CD14-positive monocyte (primary cell): ENCODE measurements at regions of chr22 and their contacts with region 1.

Region 1: DNA sequence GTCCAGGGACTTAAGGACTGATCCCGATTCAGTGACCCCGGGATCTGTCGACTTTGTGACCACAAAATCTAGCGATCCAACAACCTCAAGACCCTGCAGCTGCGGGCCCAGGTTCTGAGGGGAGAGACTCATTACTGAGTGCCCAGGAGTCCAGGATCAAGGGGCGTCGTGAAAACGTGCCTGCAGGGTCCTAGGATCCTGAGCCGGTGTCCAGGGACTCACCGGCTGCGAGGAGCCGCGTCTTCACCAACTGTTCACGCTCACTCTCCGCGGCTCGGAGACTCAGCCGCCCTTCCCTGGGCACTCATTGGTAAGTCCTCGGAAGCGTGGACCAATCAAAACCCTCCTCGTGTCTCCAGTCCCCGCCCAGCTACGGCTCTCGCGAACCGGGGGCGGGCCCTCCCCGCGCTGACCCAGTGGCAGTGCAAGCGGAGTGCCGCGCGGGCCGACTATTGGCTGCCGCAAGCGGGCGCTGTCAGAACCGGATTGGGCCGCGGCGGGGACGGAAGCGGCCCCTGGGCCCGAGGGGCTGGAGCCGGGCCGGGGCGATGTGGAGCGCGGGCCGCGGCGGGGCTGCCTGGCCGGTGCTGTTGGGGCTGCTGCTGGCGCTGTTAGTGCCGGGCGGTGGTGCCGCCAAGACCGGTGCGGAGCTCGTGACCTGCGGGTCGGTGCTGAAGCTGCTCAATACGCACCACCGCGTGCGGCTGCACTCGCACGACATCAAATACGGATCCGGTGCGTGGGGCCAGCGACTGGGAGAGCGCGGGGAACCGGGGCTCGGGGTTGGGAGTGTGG is at the start of gene SDF2L1:
- DNase-seq: peak; percentile 98 to 99 (median 99)
- H3K4me3 ChIP-seq: peak within 1 kb of the TSS; percentile 50 to 71 (median 69)
- H3K4me3 Mint-ChIP-seq: peak within 1 kb of the TSS; percentile 78 to 86
- H3K27ac ChIP-seq: peak within 1 kb of the TSS; percentile 64 to 89
- H3K27ac Mint-ChIP-seq: peak within 1 kb of the TSS; percentile 78 to 92 (median 87)
- H3K4me1 ChIP-seq: peaks cover 24 to 27% of the 10 kb centered on the region in 2 donors
- H3K4me1 Mint-ChIP-seq: peaks cover 31% of the 10 kb centered on the region
- H3K27me3 ChIP-seq: no peaks in the 10 kb centered on the region
- H3K27me3 Mint-ChIP-seq: peaks cover 0 to 3% (median 1%) of the 10 kb centered on the region in 3 donors
- CTCF ChIP-seq: peak; percentile 44
- polyA plus RNA-seq, gene SDF2L1: 31.7 to 46.2 (median 44.7) TPM

Region 2: GRCh38 chr22:21624120-21624879 is 17.7 kb before region 1 on chr22:
- intact Hi-C with region 1: loop called in 1 of 2 experiments (anchors 2 kb)
- DNase-seq: no peak
- H3K4me3 ChIP-seq: no peak overlapping the region
- H3K4me3 Mint-ChIP-seq: no peak overlapping the region
- H3K27ac ChIP-seq: peak overlapping the region; percentile 40 to 68
- H3K27ac Mint-ChIP-seq: peak overlapping the region; percentile 4 to 78 (median 74)
- H3K4me1 ChIP-seq: peaks cover 49 to 70% of the 10 kb centered on the region in 2 donors
- H3K4me1 Mint-ChIP-seq: peaks cover 71% of the 10 kb centered on the region
- H3K27me3 ChIP-seq: no peaks in the 10 kb centered on the region
- H3K27me3 Mint-ChIP-seq: peaks cover 0 to 1% (median 0%) of the 10 kb centered on the region in 3 donors
- CTCF ChIP-seq: peak; percentile 52

Region 3: GRCh38 chr22:21754523-21754922 is 112.5 kb after region 1 on chr22:
- intact Hi-C with region 1: no loop called
- DNase-seq: no peak
- H3K4me3 ChIP-seq: no peak overlapping the region
- H3K4me3 Mint-ChIP-seq: no peak overlapping the region
- H3K27ac ChIP-seq: no peak overlapping the region
- H3K27ac Mint-ChIP-seq: peak overlapping the region in 3 of 7 donors; percentile 5 to 75 (median 68)
- H3K4me1 ChIP-seq: no peaks in the 10 kb centered on the region
- H3K4me1 Mint-ChIP-seq: peaks cover 13% of the 10 kb centered on the region
- H3K27me3 ChIP-seq: no peaks in the 10 kb centered on the region
- H3K27me3 Mint-ChIP-seq: peaks cover 0 to 4% (median 3%) of the 10 kb centered on the region in 3 donors
- CTCF ChIP-seq: no peak